ENCODE measurements at regions of chr12 and their contacts with region 1.

Region 1: DNA sequence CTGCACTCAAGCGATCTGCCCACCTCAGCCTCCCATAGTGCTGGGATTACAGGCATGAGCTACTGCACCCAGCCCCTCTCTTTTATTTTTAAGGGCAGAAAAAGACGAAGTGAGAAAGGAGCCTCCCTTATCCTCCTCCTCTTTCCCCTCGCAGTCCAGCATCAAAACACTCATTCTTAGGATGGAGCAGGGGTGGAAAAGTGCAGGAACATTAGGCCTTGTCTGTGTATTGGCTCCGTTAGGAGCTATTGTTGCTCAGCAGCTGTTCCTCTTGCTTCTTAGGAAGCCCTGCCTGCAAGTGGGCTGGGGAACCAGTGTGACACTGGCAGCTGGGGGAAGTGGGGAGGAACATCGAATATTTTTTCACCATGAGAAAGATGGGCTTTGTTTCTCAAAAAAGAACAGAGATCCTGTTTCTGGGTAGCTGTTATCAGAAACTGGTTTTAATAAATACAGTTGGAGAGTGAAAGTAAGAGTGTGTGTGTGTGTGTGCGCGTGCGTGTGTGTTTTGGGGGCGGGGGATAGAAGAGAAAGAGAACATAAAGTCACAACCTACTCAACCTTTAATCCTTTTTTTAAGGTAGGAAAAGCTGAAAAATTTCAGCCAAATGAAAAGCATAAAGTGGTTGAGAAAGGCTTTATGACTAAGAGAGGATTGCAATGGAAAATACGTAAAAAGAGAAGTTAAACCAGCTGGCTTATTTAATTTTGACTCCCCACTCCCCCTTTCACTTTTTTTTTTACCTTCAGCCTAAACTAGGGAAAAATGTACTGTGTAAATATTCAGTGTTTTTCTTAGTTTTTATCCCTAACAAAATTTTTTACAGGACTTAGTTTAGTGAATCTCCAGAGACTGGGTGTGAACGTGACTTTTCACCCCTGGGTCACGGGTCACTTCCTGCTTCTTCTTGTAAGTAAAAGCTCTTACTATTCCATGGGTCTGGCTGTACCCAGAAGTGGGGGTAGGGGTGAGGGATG is 197.2 kb upstream of the PLEKHG7 start:
- DNase-seq: peak; percentile 73
- H3K4me3 ChIP-seq: peak overlapping the region; percentile 55
- H3K27ac ChIP-seq: peak overlapping the region; percentile 79
- H3K4me1 ChIP-seq: peaks cover 53% of the 10 kb centered on the region
- CTCF ChIP-seq: no peak

Region 2: DNA sequence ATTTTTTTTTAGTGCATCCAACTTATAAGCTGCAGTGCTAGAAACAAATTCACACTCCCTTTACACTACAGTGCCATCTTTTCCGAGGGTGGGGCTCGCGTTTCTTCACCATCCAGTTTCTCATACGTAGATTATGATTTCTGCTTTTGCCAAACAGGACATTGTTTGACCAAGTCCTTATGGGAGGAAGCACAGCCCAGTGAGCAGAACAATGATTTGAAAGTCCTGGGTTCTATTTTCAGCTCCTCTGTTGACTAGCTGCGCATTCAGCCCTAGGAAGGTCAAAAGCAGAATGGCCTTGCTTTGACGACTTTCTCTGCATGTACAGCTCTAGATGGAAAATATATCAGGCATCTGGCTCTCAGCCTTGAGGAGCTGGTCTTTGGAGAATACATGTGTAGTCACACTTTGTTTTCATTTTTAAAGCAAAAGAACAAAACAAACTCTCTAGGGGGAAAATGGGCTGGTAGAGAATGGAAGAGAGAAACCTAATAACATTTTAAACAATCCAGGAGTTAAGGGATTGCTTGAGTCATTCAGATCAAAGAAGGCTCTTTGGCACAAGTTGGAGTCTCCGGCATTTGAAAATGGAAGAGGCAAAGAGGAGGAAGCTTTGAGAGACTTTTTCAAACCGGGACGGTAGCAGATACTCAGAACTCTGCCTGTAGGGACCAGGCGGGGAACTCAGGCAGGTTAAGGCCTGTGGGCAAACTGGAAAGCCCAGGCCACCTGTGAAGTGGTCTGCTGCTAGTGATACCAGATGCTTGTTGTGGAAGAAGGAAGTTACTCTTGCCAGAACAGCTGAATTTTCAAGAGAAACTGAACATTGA is 60.1 kb before region 1 on chr12:
- CTCF ChIA-PET with region 1: no interaction called
- POLR2A ChIA-PET with region 1: interaction called, 10 read pairs
- intact Hi-C with region 1: no loop called
- DNase-seq: peak; percentile 98
- H3K4me3 ChIP-seq: peak overlapping the region; percentile 58
- H3K27ac ChIP-seq: peak overlapping the region; percentile 99
- H3K4me1 ChIP-seq: peaks cover 65% of the 10 kb centered on the region
- CTCF ChIP-seq: no peak

Region 3: GRCh38 chr12:92472201-92472600 is 33.3 kb before region 1 on chr12:
- CTCF ChIA-PET with region 1: interaction called, 4 read pairs
- POLR2A ChIA-PET with region 1: interaction called, 37 read pairs
- intact Hi-C with region 1: loop called (anchors 2 kb)
- DNase-seq: no peak
- H3K4me3 ChIP-seq: peak overlapping the region; percentile 70
- H3K27ac ChIP-seq: peak overlapping the region; percentile 98
- H3K4me1 ChIP-seq: peaks cover 69% of the 10 kb centered on the region
- CTCF ChIP-seq: no peak

Region 4: GRCh38 chr12:92493816-92494215 is 11.7 kb before region 1 on chr12:
- CTCF ChIA-PET with region 1: interaction called, 6 read pairs
- POLR2A ChIA-PET with region 1: interaction called, 170 read pairs
- intact Hi-C with region 1: no loop called
- DNase-seq: no peak
- H3K4me3 ChIP-seq: no peak overlapping the region
- H3K27ac ChIP-seq: no peak overlapping the region
- H3K4me1 ChIP-seq: peaks cover 19% of the 10 kb centered on the region
- CTCF ChIP-seq: no peak

Region 5: GRCh38 chr12:92524489-92524888 is 18.9 kb after region 1 on chr12:
- CTCF ChIA-PET with region 1: no interaction called
- POLR2A ChIA-PET with region 1: interaction called, 12 read pairs
- intact Hi-C with region 1: no loop called
- DNase-seq: no peak
- H3K4me3 ChIP-seq: no peak overlapping the region
- H3K27ac ChIP-seq: no peak overlapping the region
- H3K4me1 ChIP-seq: no peaks in the 10 kb centered on the region
- CTCF ChIP-seq: no peak

Region 6: GRCh38 chr12:92570056-92570753 is 64.7 kb after region 1 on chr12:
- CTCF ChIA-PET with region 1: no interaction called
- POLR2A ChIA-PET with region 1: interaction called, 3 read pairs
- intact Hi-C with region 1: loop called (anchors 1 kb)
- DNase-seq: peak; percentile 85
- H3K4me3 ChIP-seq: peak overlapping the region; percentile 22
- H3K27ac ChIP-seq: peak overlapping the region; percentile 26
- H3K4me1 ChIP-seq: peaks cover 40% of the 10 kb centered on the region
- CTCF ChIP-seq: peak; percentile 100